Cardiac septum (tissue), 1 donor: ENCODE measurements at regions of chr16 and their contacts with region 1.

Region 1: GRCh38 chr16:17467923-17468540 is 2.7 kb downstream of the XYLT1 start:
- DNase-seq: no peak

Region 2: DNA sequence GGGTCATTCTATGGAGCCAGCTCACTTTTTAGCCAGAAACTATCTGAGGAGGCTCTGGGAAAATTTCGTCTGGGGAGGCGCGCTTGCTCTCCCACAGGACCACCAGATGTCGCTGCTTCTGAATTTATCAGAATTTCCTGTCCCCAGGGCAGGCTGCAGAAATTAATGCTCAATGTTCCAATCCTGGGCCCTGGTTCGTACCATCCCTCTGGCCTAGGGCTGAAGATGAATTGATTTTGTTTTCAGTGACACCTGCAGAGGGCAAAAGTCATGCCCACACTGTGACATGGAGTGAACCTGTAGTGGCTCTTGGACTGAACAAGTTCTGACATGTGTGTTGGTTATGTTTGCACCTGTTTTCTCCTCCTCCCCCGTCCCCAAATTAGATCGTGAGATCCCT is 606.5 kb before region 1 on chr16:
- intact Hi-C with region 1: loop called (anchors 5 kb)
- DNase-seq: no peak

Region 3: GRCh38 chr16:17194190-17194780 is 273.7 kb before region 1 on chr16:
- intact Hi-C with region 1: loop called (anchors 10 kb)
- DNase-seq: peak; percentile 80

Region 4: GRCh38 chr16:17224879-17225281 is 243.2 kb before region 1 on chr16:
- intact Hi-C with region 1: loop called (anchors 10 kb)
- DNase-seq: peak; percentile 78

Region 5: GRCh38 chr16:17277977-17278381 is 190.1 kb before region 1 on chr16:
- intact Hi-C with region 1: loop called (anchors 5 kb)
- DNase-seq: no peak